ENCODE measurements at regions of chr13 and their contacts with region 1.

Region 1: DNA sequence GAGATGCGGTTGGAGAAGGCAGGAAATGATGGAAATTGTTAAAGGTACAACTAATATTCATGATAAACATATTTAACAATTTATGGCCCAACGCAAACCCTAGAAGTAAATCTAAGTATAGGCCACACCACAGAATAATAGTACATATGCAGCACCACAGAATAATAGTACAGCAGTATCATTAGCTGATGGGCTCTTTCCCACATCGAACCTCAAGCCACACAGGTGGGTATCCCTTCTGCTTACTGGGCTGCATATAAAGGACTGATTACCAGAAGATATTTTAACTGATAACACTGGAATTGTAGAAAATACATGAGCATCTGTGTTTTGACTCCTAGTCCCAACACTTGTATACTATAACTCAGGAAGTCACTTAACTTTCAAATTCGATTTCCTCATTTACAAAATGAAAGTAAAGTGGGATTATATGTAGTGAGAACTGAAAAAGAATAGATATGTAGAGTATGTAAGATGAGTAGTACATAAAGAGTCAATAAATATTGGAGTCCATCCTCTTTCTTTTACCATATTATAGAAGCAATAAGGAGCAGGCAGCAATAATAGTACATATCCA is 91.5 kb downstream of the TSC22D1 start:
- H3K4me3 Mint-ChIP-seq: no peak overlapping the region
- H3K27ac Mint-ChIP-seq: no peak overlapping the region
- H3K4me1 Mint-ChIP-seq: peaks cover 10% of the 10 kb centered on the region
- H3K27me3 Mint-ChIP-seq: no peaks in the 10 kb centered on the region

Region 2: GRCh38 chr13:43196086-43196621 is 1288.5 kb before region 1 on chr13:
- intact Hi-C with region 1: no loop called
- H3K4me3 Mint-ChIP-seq: no peak overlapping the region
- H3K27ac Mint-ChIP-seq: no peak overlapping the region
- H3K4me1 Mint-ChIP-seq: no peaks in the 10 kb centered on the region
- H3K27me3 Mint-ChIP-seq: peaks cover 6% of the 10 kb centered on the region

Region 3: GRCh38 chr13:44312898-44313551 is 171.6 kb before region 1 on chr13:
- intact Hi-C with region 1: no loop called
- H3K4me3 Mint-ChIP-seq: no peak overlapping the region
- H3K27ac Mint-ChIP-seq: no peak overlapping the region
- H3K4me1 Mint-ChIP-seq: peaks cover 20% of the 10 kb centered on the region
- H3K27me3 Mint-ChIP-seq: peaks cover 62% of the 10 kb centered on the region

Region 4: GRCh38 chr13:44648392-44649103 is 163.9 kb after region 1 on chr13:
- intact Hi-C with region 1: loop called (anchors 1 kb)
- H3K4me3 Mint-ChIP-seq: no peak overlapping the region
- H3K27ac Mint-ChIP-seq: no peak overlapping the region
- H3K4me1 Mint-ChIP-seq: no peaks in the 10 kb centered on the region
- H3K27me3 Mint-ChIP-seq: no peaks in the 10 kb centered on the region

Region 5: DNA sequence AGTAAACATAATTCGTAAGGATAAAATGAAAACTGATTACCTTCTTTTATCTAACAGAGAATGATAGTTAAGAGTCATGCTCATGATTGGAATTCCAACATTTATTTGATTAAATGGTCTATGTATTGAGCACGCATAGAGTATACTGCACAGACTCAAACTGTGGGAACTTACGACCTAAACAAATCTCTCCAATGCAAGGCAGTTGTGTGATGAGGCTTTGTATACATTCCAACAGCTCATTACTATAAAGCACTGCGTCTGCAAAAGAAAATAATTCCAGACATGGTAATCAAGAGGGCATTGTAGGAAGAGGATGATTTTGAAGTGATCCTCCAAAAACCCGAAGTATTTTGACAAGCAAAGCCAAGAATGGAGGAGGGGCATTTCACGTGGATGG is 335.1 kb after region 1 on chr13:
- intact Hi-C with region 1: loop called (anchors 5 kb)
- H3K4me3 Mint-ChIP-seq: no peak overlapping the region
- H3K27ac Mint-ChIP-seq: no peak overlapping the region
- H3K4me1 Mint-ChIP-seq: peaks cover 5% of the 10 kb centered on the region
- H3K27me3 Mint-ChIP-seq: no peaks in the 10 kb centered on the region